ENCODE measurements at regions of chr1 and their contacts with region 1.

Region 1: DNA sequence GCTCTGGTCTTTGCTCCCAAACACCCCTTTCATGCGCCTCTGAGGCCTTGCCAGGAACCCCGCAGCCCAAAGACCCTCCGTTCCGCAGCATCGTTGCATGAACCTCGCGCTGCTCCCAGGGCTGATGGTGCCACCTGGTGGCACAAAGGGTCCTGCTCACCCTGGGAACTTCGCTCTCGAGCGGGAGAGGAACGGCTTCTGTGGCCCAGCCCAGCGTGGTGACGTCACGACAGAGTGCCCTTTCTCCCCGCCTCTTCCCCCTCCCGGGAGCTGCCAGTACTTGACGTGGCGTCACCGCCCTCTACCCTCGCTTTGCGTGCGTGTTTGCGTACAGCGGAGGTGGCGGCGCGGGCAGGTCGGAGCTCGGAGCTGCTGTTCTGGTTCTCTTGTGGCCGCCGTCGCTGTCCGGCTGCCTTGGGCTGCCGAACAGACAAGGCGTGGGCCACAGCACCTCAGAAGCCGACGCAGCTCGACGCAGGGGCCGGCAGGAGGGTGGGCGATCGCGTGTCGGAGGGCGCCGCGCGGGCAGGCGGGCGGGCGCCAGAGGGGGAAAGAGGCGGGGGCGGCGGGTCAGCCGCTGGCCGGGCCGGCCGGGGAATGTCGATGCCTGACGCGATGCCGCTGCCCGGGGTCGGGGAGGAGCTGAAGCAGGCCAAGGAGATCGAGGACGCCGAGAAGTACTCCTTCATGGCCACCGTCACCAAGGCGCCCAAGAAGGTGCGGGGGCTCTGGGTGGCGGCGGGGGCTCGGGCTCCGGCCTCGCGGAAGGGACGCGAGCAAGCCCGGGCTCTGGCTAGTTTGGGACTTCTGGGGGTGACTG is at the start of gene AHCYL1:
- DNase-seq: peak; percentile 97
- H3K4me3 ChIP-seq: peak within 1 kb of the TSS; percentile 40 to 82 (median 78)
- H3K27ac ChIP-seq: peak within 1 kb of the TSS; percentile 86
- H3K4me1 ChIP-seq: peaks cover 4 to 12% (median 9%) of the 10 kb centered on the region in 4 experiments; a peak in 6 of 7 replicates
- H3K27me3 ChIP-seq: no peaks in the 10 kb centered on the region
- CTCF ChIP-seq: peak; percentile 94 to 98 (median 96)
- EP300 ChIP-seq: no peak
- POLR2A ChIP-seq: peak; percentile 82 to 86
- RAD21 ChIP-seq: peak; percentile 99
- total RNA-seq, gene AHCYL1: 92.5 and 95.9 TPM in 2 replicates

Region 2: DNA sequence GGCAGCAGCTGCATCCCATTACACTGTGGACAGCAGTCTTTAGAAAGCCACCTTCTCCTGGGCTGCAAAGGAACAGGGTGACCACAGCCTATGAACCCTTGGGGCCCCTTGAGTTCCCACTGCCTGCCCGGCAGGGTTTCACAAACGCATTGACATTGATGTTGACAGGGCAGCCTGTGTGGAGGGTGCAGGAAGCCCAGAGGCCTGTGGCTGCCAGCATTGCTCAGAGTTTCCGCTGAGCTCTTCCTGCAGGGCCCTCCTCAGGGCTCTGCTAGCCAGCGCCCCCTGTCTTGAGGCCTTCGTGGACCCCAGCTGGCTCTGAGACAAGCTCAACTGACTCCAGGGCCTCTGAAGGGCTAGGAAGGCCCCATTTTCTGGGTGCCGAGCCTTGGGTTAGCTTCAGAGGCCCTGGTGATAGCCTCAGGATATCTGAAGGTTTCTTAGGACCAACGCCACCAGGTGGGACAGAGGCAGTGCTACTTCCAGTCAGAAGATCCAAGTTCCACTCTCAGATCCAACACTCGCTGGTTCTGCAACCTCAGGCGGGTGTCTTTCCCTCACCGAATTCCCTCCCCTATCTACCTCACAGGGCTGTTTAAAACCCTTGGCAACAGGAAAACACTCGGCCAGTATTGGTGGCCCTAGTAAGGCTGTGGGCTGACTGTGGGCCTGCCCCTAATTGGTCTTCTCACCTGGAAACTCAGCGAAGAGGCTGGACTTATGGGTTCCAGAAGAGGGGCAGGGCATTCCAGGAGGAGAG is 193.8 kb before region 1 on chr1:
- CTCF ChIA-PET with region 1: interaction called, 700 read pairs
- POLR2A ChIA-PET with region 1: interaction called, 10 read pairs
- DNase-seq: no peak
- H3K4me3 ChIP-seq: no peak overlapping the region
- H3K27ac ChIP-seq: no peak overlapping the region
- H3K4me1 ChIP-seq: peaks cover 0 to 18% (median 7%) of the 10 kb centered on the region in 4 experiments; a peak in 6 of 7 replicates
- H3K27me3 ChIP-seq: peaks cover 0 to 3% (median 2%) of the 10 kb centered on the region in 4 experiments; a peak in 2 of 7 replicates
- CTCF ChIP-seq: peak; percentile 31 to 65 (median 54)
- EP300 ChIP-seq: no peak
- POLR2A ChIP-seq: no peak
- RAD21 ChIP-seq: peak; percentile 14 to 50; a peak in 3 of 4 replicates

Region 3: DNA sequence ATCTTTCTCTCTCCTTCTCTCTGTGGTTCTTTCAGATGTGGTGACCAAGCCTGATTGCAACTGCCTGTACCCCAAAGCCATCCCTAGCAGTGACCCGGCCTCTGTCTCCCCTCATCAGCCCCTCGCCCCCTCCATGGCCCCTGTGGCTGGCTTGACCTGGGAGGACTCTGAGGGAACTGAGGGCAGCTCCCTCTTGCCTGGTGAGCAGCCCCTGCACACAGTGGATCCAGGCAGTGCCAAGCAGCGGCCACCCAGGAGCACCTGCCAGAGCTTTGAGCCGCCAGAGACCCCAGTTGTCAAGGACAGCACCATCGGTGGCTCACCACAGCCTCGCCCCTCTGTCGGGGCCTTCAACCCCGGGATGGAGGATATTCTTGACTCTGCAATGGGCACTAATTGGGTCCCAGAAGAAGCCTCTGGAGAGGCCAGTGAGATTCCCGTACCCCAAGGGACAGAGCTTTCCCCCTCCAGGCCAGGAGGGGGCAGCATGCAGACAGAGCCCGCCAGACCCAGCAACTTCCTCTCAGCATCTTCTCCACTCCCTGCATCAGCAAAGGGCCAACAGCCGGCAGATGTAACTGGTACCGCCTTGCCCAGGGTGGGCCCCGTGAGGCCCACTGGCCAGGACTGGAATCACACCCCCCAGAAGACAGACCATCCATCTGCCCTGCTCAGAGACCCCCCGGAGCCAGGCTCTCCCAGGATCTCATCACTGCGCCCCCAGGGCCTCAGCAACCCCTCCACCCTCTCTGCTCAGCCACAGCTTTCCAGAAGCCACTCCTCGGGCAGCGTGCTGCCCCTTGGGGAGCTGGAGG is 61.3 kb before region 1 on chr1:
- CTCF ChIA-PET with region 1: interaction called, 333 read pairs
- POLR2A ChIA-PET with region 1: interaction called, 15 read pairs
- DNase-seq: peak; percentile 34 to 87
- H3K4me3 ChIP-seq: no peak overlapping the region
- H3K27ac ChIP-seq: no peak overlapping the region
- H3K4me1 ChIP-seq: no peaks in the 10 kb centered on the region; a peak in 1 of 7 replicates
- H3K27me3 ChIP-seq: no peaks in the 10 kb centered on the region
- CTCF ChIP-seq: peak; percentile 87 to 92 (median 91)
- EP300 ChIP-seq: no peak
- POLR2A ChIP-seq: no peak
- RAD21 ChIP-seq: peak; percentile 78 to 88

Region 4: GRCh38 chr1:109959974-109960744 is 24.5 kb before region 1 on chr1:
- CTCF ChIA-PET with region 1: interaction called, 13 read pairs
- POLR2A ChIA-PET with region 1: no interaction called
- DNase-seq: no peak
- H3K4me3 ChIP-seq: peak overlapping the region in 2 of 4 experiments; percentile 13 to 45; a peak in 4 of 8 replicates
- H3K27ac ChIP-seq: no peak overlapping the region; the same call in 1 of the 2 replicates
- H3K4me1 ChIP-seq: peaks cover 5 to 26% (median 17%) of the 10 kb centered on the region in 4 experiments; a peak in 6 of 7 replicates
- H3K27me3 ChIP-seq: peaks cover 0 to 9% (median 2%) of the 10 kb centered on the region in 4 experiments; a peak in 4 of 7 replicates
- CTCF ChIP-seq: no peak
- EP300 ChIP-seq: 0 out of 3 replicates have a peak, but pooled peaks of 1 of the 2 experiments have one; percentile 33
- POLR2A ChIP-seq: no peak
- RAD21 ChIP-seq: no peak

Region 5: DNA sequence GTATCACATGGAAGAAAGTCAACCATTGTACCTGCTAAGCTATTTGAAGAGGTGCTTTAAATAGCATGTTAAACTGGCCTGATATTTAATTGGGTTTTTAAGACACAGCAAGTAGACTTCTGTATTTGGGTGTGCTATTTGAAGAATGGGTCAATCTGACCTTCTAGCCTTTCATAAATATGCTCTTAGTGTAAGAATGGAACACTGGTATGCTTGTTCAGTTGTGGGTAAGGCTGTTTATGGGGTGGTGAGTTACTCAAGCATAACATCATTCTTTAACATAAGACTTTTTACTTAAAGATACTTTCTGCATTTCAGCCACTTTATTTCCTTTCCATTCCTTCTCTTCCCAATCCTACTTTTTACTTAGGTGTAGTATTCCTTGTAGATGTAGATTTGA is 21.3 kb after region 1 on chr1:
- CTCF ChIA-PET with region 1: interaction called, 39 read pairs
- POLR2A ChIA-PET with region 1: interaction called, 12 read pairs
- DNase-seq: no peak
- H3K4me3 ChIP-seq: no peak overlapping the region
- H3K27ac ChIP-seq: no peak overlapping the region
- H3K4me1 ChIP-seq: peaks cover 9 to 25% (median 19%) of the 10 kb centered on the region in 4 experiments; a peak in 6 of 7 replicates
- H3K27me3 ChIP-seq: no peaks in the 10 kb centered on the region
- CTCF ChIP-seq: no peak
- EP300 ChIP-seq: no peak
- POLR2A ChIP-seq: no peak
- RAD21 ChIP-seq: no peak

Measured in H1 (cell line).